Activated T-helper 1 cell treated with anti-CD3 and anti-CD28 coated beads, Interleukin-12 subunit alpha, Interleukin-12 subunit beta, Interleukin-2, Interleukin-4 antibody, amounts not matched to agents 30 ng/mL and 10 ng/mL and 1 ng/mL, durations not matched to agents 14 hours and 24 hours and 36 hours (primary cell): ENCODE measurements at regions of chr2 and their contacts with region 1.

Region 1: GRCh38 chr2:131413148-131413747 is 49.3 kb upstream of the RAB6D start:
- DNase-seq: no peak
- H3K4me3 Mint-ChIP-seq: no peak overlapping the region
- H3K27ac Mint-ChIP-seq: no peak overlapping the region
- H3K4me1 Mint-ChIP-seq: peaks cover 12% of the 10 kb centered on the region
- H3K27me3 Mint-ChIP-seq: peaks cover 13% of the 10 kb centered on the region

Region 2: DNA sequence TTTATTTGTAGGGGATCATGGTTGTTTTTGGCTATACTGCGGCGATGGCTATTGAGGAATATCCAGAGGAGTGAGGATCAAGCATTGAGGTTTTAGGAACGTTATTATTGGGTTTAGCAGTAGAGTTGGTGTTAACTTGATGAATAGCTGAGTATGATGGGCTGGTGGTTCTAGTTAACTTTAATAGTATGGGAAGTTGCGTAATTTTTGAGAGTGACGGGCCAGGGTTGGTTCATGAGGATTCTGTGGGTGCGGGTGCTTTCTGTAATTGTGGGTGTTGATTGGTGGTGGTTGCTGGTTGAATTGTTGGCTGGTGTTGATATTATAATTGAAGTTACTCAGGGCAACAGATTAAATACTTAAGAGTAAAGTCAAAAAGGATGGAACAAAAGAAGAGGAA is 43.3 kb before region 1 on chr2:
- intact Hi-C with region 1: no loop called
- DNase-seq: no peak
- H3K4me3 Mint-ChIP-seq: no peak overlapping the region
- H3K27ac Mint-ChIP-seq: no peak overlapping the region
- H3K4me1 Mint-ChIP-seq: no peaks in the 10 kb centered on the region
- H3K27me3 Mint-ChIP-seq: peaks cover 7% of the 10 kb centered on the region

Region 3: DNA sequence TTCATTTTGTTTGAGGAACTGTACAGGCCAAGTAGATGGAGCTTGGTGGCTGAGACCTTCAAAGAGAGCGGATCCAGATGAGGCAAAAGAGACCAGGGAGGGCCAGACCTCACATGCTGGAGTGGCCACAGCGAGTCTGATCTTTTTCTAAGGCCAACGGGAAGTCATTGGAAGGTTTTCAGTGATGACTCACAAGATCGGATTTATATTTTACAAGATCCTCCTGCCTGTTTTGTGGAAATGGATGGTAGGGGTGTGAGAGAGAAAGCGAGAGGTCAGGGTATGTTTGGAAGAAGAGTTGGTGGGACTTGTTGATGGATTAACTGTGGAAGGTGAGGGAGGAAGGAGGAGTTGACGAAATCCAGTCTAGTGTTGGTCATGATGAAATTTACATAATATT is 18.1 kb after region 1 on chr2:
- intact Hi-C with region 1: no loop called
- DNase-seq: no peak
- H3K4me3 Mint-ChIP-seq: no peak overlapping the region
- H3K27ac Mint-ChIP-seq: no peak overlapping the region
- H3K4me1 Mint-ChIP-seq: peaks cover 3% of the 10 kb centered on the region
- H3K27me3 Mint-ChIP-seq: peaks cover 56% of the 10 kb centered on the region

Region 4: GRCh38 chr2:131521961-131522794 is 108.9 kb after region 1 on chr2:
- intact Hi-C with region 1: loop called (anchors 5 kb)
- DNase-seq: no peak
- H3K4me3 Mint-ChIP-seq: no peak overlapping the region
- H3K27ac Mint-ChIP-seq: no peak overlapping the region
- H3K4me1 Mint-ChIP-seq: peaks cover under 1% of the 10 kb centered on the region
- H3K27me3 Mint-ChIP-seq: peaks cover 1% of the 10 kb centered on the region

Region 5: DNA sequence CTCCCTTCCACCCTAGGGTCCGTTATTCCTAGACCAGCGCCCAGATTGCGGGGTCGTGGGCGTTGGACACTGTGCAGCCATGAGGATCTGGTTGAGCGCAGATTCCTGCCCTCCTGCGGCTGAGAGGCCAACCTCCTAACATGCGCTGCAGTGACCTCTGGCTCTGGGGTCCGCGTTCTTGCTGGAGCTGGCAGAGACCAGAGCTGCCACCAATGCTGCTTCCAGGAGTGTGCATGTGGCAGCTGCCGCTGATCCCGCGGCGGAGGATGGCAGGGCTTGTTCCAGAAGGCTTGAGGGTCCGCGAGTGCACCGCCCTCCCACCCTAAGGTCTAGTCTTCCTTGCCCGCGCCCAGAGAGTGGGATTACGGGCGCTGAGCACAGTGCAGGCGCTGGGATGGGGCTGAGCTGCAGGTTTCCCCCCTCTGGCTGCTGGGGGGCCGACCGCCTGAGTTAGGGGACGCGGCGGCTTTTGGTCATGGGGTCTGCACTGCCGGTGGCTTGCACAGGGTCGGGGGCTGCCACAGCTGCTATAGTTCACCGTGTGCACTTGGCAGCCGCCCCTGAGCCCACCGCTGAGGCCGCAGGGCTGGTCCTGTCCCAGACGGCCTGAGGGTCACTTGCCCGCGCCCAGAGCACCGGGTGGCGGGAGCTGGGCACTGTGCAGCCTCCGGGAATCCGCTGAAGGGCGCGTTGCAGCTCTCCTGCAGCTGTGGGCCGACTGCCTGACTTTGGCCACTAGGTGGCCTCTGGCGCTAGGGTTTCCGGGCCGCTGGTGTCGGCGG is 260.3 kb after region 1 on chr2:
- intact Hi-C with region 1: loop called (anchors 1 kb)
- DNase-seq: peak; percentile 56
- H3K4me3 Mint-ChIP-seq: no peak overlapping the region
- H3K27ac Mint-ChIP-seq: no peak overlapping the region
- H3K4me1 Mint-ChIP-seq: peaks cover 5% of the 10 kb centered on the region
- H3K27me3 Mint-ChIP-seq: peaks cover 44% of the 10 kb centered on the region

Region 6: DNA sequence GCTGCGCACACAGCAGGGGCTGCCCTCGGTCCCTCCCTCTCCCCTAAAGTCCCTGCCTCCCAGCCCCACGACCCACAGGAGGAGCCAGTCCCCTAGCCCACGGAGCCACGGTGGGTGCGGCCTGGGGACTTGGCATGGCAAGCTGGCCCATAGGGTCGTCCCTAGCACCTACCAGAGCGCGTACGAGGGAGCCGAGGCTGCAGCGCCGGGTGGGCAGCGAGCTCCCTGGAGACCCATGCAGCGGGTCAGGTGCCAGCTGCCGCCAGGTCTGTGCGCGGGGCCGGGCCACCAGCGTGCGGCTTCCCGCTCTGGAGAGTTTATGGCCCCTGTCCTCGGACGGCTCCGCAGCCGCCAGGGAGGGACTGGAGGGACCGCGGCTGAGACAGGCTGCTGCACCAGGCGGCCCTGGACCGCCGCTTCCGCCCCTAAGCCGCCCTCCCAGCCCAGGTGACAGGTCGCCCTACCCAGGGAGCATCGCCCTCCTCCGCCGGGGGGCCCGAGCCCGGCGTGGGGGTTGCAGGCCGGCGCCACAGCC is 388.0 kb after region 1 on chr2:
- intact Hi-C with region 1: loop called (anchors 5 kb)
- DNase-seq: no peak
- H3K4me3 Mint-ChIP-seq: no peak overlapping the region
- H3K27ac Mint-ChIP-seq: no peak overlapping the region
- H3K4me1 Mint-ChIP-seq: no peaks in the 10 kb centered on the region
- H3K27me3 Mint-ChIP-seq: peaks cover 7% of the 10 kb centered on the region